GM12878 (cell line): ENCODE measurements at regions of chr14 and their contacts with region 1.

Region 1: GRCh38 chr14:23588884-23589598 is 10.5 kb upstream of the JPH4 start:
- DNase-seq: peak; percentile 56
- ATAC-seq: peak; percentile 100
- H3K4me3 ChIP-seq: no peak overlapping the region
- H3K27ac ChIP-seq: no peak overlapping the region
- H3K4me1 ChIP-seq: peaks cover 8% of the 10 kb centered on the region
- H3K27me3 ChIP-seq: no peaks in the 10 kb centered on the region
- CTCF ChIP-seq: peak; percentile 94 to 99 (median 95); a peak in 5 of 6 replicates
- EP300 ChIP-seq: 0 out of 4 replicates have a peak, but pooled peaks of 1 of the 2 experiments have one; percentile 15
- POLR2A ChIP-seq: no peak
- RAD21 ChIP-seq: peak; percentile 99

Region 2: DNA sequence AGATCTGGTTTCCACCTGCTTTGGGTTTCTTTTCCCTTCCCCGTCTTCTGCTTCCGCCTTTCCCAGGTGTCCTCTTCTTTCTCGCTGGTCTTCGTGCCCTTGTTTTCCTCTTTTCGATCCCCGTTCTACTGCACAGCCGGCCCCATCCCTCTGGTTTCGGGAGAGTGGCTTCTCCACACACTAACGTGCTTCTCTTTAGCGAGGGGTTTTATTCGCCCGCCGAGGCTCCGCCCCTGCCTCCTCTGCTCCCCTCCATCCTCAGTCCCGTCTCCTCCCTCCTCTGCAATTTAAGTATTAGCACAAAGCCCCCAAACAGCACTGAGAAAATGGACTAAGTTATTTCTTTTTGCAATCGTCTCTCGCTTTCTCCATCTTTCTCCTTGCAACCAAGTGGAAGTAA is 405.6 kb before region 1 on chr14 and contains the start of gene SLC7A8:
- CTCF ChIA-PET with region 1: no interaction called
- POLR2A ChIA-PET with region 1: no interaction called
- RAD21 ChIA-PET with region 1: no interaction called
- SMC1A ChIA-PET with region 1: no interaction called
- in situ Hi-C with region 1: no loop called
- intact Hi-C with region 1: no loop called
- DNase-seq: no peak
- ATAC-seq: no peak
- H3K4me3 ChIP-seq: peak within 1 kb of the TSS; percentile 20; the same call in 1 of the 2 replicates
- H3K27ac ChIP-seq: no peak within 1 kb of the TSS
- H3K4me1 ChIP-seq: peaks cover 7% of the 10 kb centered on the region; the same call in 1 of the 2 replicates
- H3K27me3 ChIP-seq: peaks cover 3 to 12% of the 10 kb centered on the region in 2 experiments
- CTCF ChIP-seq: no peak
- EP300 ChIP-seq: no peak
- POLR2A ChIP-seq: no peak
- RAD21 ChIP-seq: no peak
- polyA plus RNA-seq, gene SLC7A8: not detected

Region 3: GRCh38 chr14:23605931-23606585 is 17.0 kb after region 1 on chr14:
- CTCF ChIA-PET with region 1: interaction called, 33 read pairs
- POLR2A ChIA-PET with region 1: interaction called, 7 read pairs
- RAD21 ChIA-PET with region 1: interaction called, 25 read pairs
- SMC1A ChIA-PET with region 1: interaction called, 21 read pairs
- in situ Hi-C with region 1: no loop called
- intact Hi-C with region 1: no loop called
- DNase-seq: peak; percentile 83
- ATAC-seq: peak; percentile 89
- H3K4me3 ChIP-seq: no peak overlapping the region
- H3K27ac ChIP-seq: peak overlapping the region; percentile 92
- H3K4me1 ChIP-seq: peaks cover 52% of the 10 kb centered on the region
- H3K27me3 ChIP-seq: no peaks in the 10 kb centered on the region
- CTCF ChIP-seq: no peak
- EP300 ChIP-seq: peak in 1 of 2 experiments; percentile 79; a peak in 1 of 4 replicates
- POLR2A ChIP-seq: peak; percentile 32; the same call in 1 of the 2 replicates
- RAD21 ChIP-seq: no peak

Region 4: DNA sequence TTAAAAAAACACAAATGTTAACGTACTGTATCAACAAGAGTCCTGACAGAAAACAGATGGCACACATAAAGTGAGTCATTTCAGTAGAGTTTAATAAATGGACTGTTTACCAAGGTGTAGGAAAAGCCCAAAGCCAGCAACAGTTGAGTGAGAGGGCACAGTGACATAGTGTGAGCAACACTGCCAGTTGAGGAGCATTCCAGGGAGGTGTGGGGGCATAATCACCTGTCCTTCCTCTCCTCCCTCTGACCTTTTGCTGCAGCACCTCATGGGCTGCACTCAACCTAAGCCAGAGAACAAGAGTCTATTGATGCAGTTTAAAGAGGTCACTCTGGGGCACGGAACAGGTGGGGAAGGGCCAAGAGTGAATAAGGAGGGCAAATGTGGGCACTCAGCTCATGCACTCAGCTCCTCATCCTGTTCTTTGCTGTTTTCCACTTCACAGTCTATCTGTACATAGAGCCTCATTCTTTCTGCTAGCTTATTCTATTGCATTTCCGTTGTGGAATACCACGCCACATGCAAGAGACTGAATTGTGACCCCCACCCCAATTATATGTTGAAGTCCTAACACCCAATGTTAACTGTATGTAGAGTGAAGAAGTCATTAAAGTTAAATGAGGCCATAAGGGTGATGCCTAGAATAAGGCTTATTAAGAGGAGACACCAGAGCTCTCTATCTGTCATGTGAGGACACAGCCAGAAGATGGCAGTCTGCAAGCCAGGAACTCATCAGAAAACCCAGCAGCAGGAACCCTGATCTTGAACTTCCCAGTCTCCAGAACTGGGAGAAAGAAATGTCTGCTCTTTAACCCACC is 76.5 kb after region 1 on chr14:
- CTCF ChIA-PET with region 1: interaction called, 19 read pairs
- POLR2A ChIA-PET with region 1: no interaction called
- RAD21 ChIA-PET with region 1: interaction called, 13 read pairs
- SMC1A ChIA-PET with region 1: interaction called, 11 read pairs
- in situ Hi-C with region 1: no loop called
- intact Hi-C with region 1: loop called (anchors 2 kb)
- DNase-seq: no peak
- ATAC-seq: peak; percentile 85
- H3K4me3 ChIP-seq: no peak overlapping the region
- H3K27ac ChIP-seq: no peak overlapping the region
- H3K4me1 ChIP-seq: no peaks in the 10 kb centered on the region
- H3K27me3 ChIP-seq: no peaks in the 10 kb centered on the region; a peak in 1 of 4 replicates
- CTCF ChIP-seq: peak; percentile 55 to 76 (median 69)
- EP300 ChIP-seq: no peak
- POLR2A ChIP-seq: no peak
- RAD21 ChIP-seq: peak; percentile 66

Region 5: DNA sequence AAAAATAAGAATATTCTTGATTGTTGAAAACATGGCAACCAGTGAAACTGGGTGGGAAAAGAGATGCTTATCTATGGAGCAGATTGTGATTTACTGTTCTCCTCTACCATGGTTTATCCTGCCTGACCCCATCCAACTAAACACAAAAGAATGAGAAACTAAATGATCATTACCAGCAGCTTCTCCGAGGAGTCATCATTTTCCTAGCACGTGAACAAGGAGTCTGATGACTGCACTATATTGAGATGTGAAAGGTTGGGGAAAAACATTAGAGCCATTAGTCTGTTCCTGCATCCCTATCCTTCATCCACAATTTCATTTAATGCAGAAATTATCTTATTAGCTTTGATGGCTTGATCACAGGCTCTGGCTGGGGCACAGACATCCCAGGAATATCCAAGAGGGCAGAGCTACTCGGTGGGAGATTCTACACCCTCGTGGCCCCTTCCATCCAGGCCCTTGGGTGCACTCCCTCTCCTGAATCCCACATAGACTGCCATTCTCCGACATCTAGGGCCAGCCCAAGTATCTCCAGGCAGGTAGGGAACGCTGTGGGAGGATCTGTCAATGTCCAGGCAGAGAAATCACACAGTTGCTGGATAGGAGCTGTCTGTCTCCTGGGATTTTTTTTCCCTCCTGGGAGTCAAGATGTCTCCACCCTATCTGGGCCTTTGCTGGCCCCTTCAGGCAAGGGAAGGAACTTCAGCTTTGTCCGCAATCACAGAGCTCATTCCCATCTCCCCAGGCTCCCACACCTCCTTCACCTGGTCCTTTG is 321.2 kb after region 1 on chr14:
- CTCF ChIA-PET with region 1: interaction called, 58 read pairs
- POLR2A ChIA-PET with region 1: interaction called, 3 read pairs
- RAD21 ChIA-PET with region 1: interaction called, 41 read pairs
- SMC1A ChIA-PET with region 1: interaction called, 23 read pairs
- in situ Hi-C with region 1: no loop called
- intact Hi-C with region 1: loop called (anchors 1 kb)
- DNase-seq: no peak
- ATAC-seq: peak; percentile 84
- H3K4me3 ChIP-seq: no peak overlapping the region
- H3K27ac ChIP-seq: no peak overlapping the region
- H3K4me1 ChIP-seq: no peaks in the 10 kb centered on the region
- H3K27me3 ChIP-seq: peaks cover 0 to 2% of the 10 kb centered on the region in 2 experiments; a peak in 2 of 4 replicates
- CTCF ChIP-seq: peak; percentile 81 to 82 (median 81)
- EP300 ChIP-seq: no peak
- POLR2A ChIP-seq: no peak
- RAD21 ChIP-seq: peak; percentile 84

Region 6: DNA sequence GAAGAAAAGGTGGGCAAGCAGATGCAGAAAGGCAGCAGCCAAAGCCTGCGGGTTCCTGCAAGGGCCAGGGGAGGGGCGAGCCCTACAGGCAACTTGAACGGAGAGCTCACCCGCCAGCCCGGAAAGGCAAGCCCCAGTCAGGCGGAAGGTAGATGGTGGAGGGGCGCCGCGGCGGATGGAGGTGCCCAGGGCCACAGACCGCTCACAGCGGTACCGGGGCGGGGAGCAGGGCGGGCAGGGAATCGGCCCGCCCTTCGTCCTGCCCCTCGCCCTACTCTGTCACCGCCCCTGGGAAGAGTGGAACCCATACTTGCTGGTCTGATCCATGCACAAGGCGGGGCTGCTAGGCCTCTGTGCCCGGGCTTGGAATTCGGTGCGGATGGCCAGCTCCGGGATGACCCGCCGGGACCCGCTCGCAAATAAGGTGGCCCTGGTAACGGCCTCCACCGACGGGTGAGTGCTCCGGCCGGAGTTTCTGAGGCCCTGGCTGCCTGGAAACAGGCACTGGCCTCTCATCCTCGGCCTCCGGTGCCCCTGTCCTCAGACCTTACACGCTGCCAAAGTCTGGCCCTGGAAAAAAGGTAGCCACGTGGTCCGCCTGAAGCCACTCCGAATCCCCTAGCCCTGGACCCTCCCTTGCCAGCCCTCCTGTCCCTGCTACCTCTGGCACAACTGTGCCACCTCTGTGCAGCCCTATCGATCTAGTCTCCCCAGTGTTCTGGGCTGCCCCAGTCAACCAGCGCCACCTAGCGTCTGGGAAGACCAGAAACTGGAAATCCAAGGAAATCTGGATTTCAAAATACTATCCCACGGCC is 364.6 kb after region 1 on chr14 and contains the start of gene DHRS4:
- CTCF ChIA-PET with region 1: interaction called, 4 read pairs
- POLR2A ChIA-PET with region 1: no interaction called
- RAD21 ChIA-PET with region 1: no interaction called
- SMC1A ChIA-PET with region 1: interaction called, 3 read pairs
- in situ Hi-C with region 1: no loop called
- intact Hi-C with region 1: loop called (anchors 5 kb)
- DNase-seq: peak; percentile 47
- ATAC-seq: peak; percentile 99
- H3K4me3 ChIP-seq: peak within 1 kb of the TSS; percentile 73
- H3K27ac ChIP-seq: peak within 1 kb of the TSS; percentile 78
- H3K4me1 ChIP-seq: no peaks in the 10 kb centered on the region
- H3K27me3 ChIP-seq: no peaks in the 10 kb centered on the region
- CTCF ChIP-seq: peak; percentile 80 to 92 (median 92)
- EP300 ChIP-seq: no peak
- POLR2A ChIP-seq: peak; percentile 71
- RAD21 ChIP-seq: peak; percentile 78
- polyA plus RNA-seq, gene DHRS4: 2.4 to 8.2 TPM